OCI-LY7 (cell line): ENCODE measurements at regions of chr22 and their contacts with region 1.

Region 1: DNA sequence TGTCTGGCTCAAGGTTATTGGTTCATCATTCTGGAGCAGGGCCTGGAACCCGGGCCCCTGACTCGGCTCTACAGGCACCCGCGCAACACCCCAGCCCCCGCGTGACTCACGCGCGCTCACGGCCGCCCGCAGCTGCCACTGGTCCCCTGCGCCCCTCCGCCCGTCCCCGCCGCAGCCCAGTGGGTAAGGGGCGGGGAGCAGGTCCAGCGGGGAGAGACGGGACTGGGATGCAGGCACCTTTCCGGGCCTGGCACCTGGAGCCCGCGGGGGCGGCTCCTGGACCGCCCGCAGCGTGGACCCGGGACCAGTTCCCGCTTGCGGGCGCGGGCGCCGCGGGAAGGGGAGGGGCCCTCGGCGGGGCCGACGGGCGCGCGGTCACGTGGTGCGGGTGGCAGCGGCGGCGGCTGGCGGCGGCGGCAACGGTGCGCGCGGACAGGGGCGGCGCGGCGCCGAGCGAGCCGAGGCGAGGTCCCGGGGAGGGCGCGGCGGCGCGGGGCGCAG is 7.2 kb downstream of the SEPTIN3 start:
- DNase-seq: no peak
- H3K4me3 ChIP-seq: no peak overlapping the region
- H3K27ac ChIP-seq: no peak overlapping the region
- H3K4me1 ChIP-seq: no peaks in the 10 kb centered on the region
- CTCF ChIP-seq: no peak

Region 2: GRCh38 chr22:42025436-42025835 is 49.0 kb after region 1 on chr22:
- CTCF ChIA-PET with region 1: no interaction called
- POLR2A ChIA-PET with region 1: no interaction called
- intact Hi-C with region 1: no loop called
- DNase-seq: no peak
- H3K4me3 ChIP-seq: no peak overlapping the region
- H3K27ac ChIP-seq: no peak overlapping the region
- H3K4me1 ChIP-seq: peaks cover 7% of the 10 kb centered on the region
- CTCF ChIP-seq: no peak

Region 3: GRCh38 chr22:42052765-42053164 is 76.3 kb after region 1 on chr22:
- CTCF ChIA-PET with region 1: no interaction called
- POLR2A ChIA-PET with region 1: no interaction called
- intact Hi-C with region 1: loop called (anchors 10 kb)
- DNase-seq: no peak
- H3K4me3 ChIP-seq: no peak overlapping the region
- H3K27ac ChIP-seq: no peak overlapping the region
- H3K4me1 ChIP-seq: no peaks in the 10 kb centered on the region
- CTCF ChIP-seq: no peak

Region 4: GRCh38 chr22:42061041-42061440 is 84.6 kb after region 1 on chr22:
- CTCF ChIA-PET with region 1: no interaction called
- POLR2A ChIA-PET with region 1: interaction called, 10 read pairs
- intact Hi-C with region 1: loop called (anchors 10 kb)
- DNase-seq: no peak
- H3K4me3 ChIP-seq: no peak overlapping the region
- H3K27ac ChIP-seq: no peak overlapping the region
- H3K4me1 ChIP-seq: no peaks in the 10 kb centered on the region
- CTCF ChIP-seq: no peak

Region 5: DNA sequence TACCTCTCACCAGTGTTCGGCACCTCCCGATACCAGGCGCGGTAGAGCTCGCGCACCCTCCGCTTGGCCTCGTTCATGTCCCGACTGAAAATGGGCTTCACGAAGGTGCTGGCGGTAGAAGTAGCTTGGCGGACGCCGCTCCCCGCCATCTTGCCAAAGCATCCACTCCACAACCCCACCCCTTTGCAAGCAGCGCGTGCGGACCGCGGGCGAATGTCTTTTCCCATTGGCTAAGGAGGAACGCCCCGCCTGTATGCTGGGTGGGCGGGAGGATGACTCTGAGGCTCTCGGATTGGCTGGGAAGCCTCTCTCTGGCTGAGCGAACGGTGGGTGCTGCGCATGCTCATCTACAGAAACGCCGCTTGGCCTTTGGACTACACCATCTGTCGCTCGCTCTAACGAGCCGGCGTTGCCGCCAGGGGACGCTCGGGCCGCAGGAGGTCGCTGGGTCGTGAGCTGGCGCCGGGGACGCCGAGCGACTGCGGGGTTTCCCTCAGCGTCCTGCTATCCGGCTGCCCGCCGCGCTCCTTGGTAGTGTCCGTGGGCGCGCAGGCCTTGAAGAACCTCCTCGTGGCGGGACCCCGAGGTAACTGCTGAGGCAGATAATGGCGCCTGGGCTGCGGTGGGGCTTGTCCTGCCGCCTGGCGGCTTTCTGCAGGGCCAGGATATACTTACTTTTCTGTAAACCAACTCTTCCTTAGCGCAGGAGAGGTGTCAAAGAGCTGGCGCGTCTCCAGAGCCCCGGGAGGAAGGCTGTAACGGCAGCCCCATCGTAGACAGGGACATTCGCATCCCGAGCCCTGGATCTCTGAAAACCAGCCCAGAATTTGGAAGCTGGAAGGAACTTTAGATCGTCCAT is 114.4 kb after region 1 on chr22 and contains the start of gene NDUFA6:
- CTCF ChIA-PET with region 1: no interaction called
- POLR2A ChIA-PET with region 1: no interaction called
- intact Hi-C with region 1: no loop called
- DNase-seq: peak; percentile 99
- H3K4me3 ChIP-seq: peak within 1 kb of the TSS; percentile 84
- H3K27ac ChIP-seq: peak within 1 kb of the TSS; percentile 71
- H3K4me1 ChIP-seq: peaks cover 23% of the 10 kb centered on the region
- CTCF ChIP-seq: peak; percentile 93
- total RNA-seq, gene NDUFA6: 49.8 and 62.4 TPM in 2 replicates